GM12878 (cell line): ENCODE measurements at regions of chr2 and their contacts with region 1.

Region 1: GRCh38 chr2:201660293-201660895 is 17.1 kb upstream of the TMEM237 start:
- DNase-seq: no peak
- ATAC-seq: peak; percentile 46; the same call in 2 of the 3 replicates
- H3K4me3 ChIP-seq: no peak overlapping the region
- H3K27ac ChIP-seq: no peak overlapping the region
- H3K4me1 ChIP-seq: no peaks in the 10 kb centered on the region
- H3K27me3 ChIP-seq: no peaks in the 10 kb centered on the region; a peak in 1 of 4 replicates
- CTCF ChIP-seq: no peak
- EP300 ChIP-seq: no peak
- POLR2A ChIP-seq: no peak
- RAD21 ChIP-seq: no peak

Region 2: GRCh38 chr2:202185816-202186221 is 525.4 kb after region 1 on chr2:
- CTCF ChIA-PET with region 1: no interaction called
- POLR2A ChIA-PET with region 1: no interaction called
- RAD21 ChIA-PET with region 1: no interaction called
- SMC1A ChIA-PET with region 1: no interaction called
- in situ Hi-C with region 1: loop called (anchors 10 kb)
- intact Hi-C with region 1: no loop called
- DNase-seq: no peak
- ATAC-seq: no peak
- H3K4me3 ChIP-seq: no peak overlapping the region
- H3K27ac ChIP-seq: no peak overlapping the region
- H3K4me1 ChIP-seq: no peaks in the 10 kb centered on the region
- H3K27me3 ChIP-seq: no peaks in the 10 kb centered on the region; a peak in 1 of 4 replicates
- CTCF ChIP-seq: no peak
- EP300 ChIP-seq: no peak
- POLR2A ChIP-seq: no peak
- RAD21 ChIP-seq: no peak